ENCODE measurements at regions of chr14 and their contacts with region 1.

Region 1: DNA sequence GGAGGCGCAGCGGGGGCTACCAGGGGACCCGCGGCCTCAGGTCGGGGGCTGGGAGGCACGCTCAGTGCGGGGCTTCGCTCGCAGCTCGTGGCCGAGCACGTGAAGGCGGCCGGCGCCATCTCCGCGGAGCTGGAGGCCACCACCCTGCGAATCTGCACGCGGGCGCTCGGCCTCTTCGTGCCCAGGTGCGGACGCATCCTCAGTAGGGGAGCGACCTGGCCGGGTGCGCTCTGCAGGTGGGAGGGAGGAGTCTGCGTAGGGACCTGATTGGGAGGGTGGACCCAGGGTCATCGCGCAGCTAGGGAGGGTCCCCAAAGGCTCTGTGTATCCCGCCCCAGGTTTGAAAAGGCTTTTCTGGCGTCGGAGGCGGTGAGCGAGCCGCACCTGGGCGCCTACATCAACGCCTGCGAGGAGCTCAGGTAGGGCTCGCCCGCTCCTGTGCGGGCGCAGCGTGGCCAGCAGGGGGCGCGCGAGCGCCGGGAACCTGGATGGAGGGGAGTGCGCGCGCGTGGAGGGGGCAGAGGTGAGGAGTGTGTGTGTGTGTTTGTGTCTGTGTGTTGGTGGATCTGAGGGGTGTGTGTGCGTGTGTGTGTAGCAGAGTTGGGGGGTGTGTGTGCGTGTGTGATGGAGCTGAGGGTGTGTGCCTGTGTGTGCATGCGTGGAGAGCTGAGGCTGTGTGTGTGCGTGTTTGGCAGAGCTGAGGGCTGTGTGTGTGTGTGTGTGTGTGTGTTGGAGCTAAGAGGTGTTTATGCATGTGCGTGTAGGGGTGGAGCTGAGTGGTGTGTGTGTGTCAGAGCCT is 10.3 kb downstream of the EXOC3L4 start:
- DNase-seq: peak; percentile 91
- H3K4me3 ChIP-seq: peak overlapping the region in 1 of 2 experiments; percentile 57; a peak in 1 of 4 replicates
- H3K27ac ChIP-seq: no peak overlapping the region
- H3K4me1 ChIP-seq: peaks cover 6 to 9% of the 10 kb centered on the region in 2 experiments; a peak in 3 of 4 replicates
- H3K27me3 ChIP-seq: peaks cover 25% of the 10 kb centered on the region
- CTCF ChIP-seq: peak; percentile 95
- EP300 ChIP-seq: no peak
- RAD21 ChIP-seq: peak; percentile 87

Region 2: GRCh38 chr14:102694530-102695166 is 410.2 kb before region 1 on chr14:
- CTCF ChIA-PET with region 1: interaction called, 12 read pairs
- POLR2A ChIA-PET with region 1: no interaction called
- DNase-seq: peak; percentile 73
- H3K4me3 ChIP-seq: no peak overlapping the region
- H3K27ac ChIP-seq: no peak overlapping the region
- H3K4me1 ChIP-seq: peaks cover 0 to 31% of the 10 kb centered on the region in 2 experiments; a peak in 3 of 4 replicates
- H3K27me3 ChIP-seq: no peaks in the 10 kb centered on the region
- CTCF ChIP-seq: peak; percentile 79
- EP300 ChIP-seq: no peak
- RAD21 ChIP-seq: peak; percentile 85

Region 3: GRCh38 chr14:103091041-103091882 is 13.6 kb before region 1 on chr14:
- CTCF ChIA-PET with region 1: interaction called, 69 read pairs
- POLR2A ChIA-PET with region 1: no interaction called
- DNase-seq: peak; percentile 94
- H3K4me3 ChIP-seq: peak overlapping the region in 1 of 2 experiments; percentile 33; a peak in 2 of 4 replicates
- H3K27ac ChIP-seq: no peak overlapping the region
- H3K4me1 ChIP-seq: peaks cover 0 to 4% of the 10 kb centered on the region in 2 experiments; a peak in 1 of 4 replicates
- H3K27me3 ChIP-seq: no peaks in the 10 kb centered on the region
- CTCF ChIP-seq: peak; percentile 34; the same call in 1 of the 2 replicates
- EP300 ChIP-seq: no peak
- RAD21 ChIP-seq: peak; percentile 20; the same call in 1 of the 2 replicates

Region 4: DNA sequence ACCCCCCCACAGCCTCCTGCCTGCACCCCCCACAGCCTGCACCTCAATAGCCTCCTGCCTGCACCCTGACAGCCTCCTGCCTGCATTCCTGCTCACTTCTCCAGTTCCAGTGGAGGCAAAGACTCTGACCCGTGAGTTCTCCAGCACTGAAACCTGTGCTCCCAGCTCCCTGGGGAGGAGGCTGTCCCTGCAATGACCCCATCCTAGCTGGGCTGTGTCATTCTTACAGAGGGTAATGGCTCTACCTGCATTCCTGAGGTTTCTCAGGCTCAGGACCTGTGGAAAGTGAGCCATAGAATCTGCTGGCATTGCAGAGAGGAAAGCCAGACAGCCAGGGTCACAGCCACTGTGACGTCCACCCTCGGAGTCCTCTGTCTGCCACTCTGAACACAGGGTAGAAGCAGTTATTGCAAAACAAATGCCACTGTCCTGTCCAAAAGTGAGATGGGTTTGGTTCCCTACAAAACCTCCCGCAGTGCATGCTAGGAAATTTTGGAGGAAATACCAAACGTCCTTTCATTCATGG is 56.1 kb after region 1 on chr14:
- CTCF ChIA-PET with region 1: interaction called, 32 read pairs
- POLR2A ChIA-PET with region 1: no interaction called
- DNase-seq: no peak
- H3K4me3 ChIP-seq: no peak overlapping the region
- H3K27ac ChIP-seq: no peak overlapping the region
- H3K4me1 ChIP-seq: peaks cover 0 to 3% of the 10 kb centered on the region in 2 experiments; a peak in 1 of 4 replicates
- H3K27me3 ChIP-seq: no peaks in the 10 kb centered on the region
- CTCF ChIP-seq: no peak
- EP300 ChIP-seq: no peak
- RAD21 ChIP-seq: no peak

Region 5: DNA sequence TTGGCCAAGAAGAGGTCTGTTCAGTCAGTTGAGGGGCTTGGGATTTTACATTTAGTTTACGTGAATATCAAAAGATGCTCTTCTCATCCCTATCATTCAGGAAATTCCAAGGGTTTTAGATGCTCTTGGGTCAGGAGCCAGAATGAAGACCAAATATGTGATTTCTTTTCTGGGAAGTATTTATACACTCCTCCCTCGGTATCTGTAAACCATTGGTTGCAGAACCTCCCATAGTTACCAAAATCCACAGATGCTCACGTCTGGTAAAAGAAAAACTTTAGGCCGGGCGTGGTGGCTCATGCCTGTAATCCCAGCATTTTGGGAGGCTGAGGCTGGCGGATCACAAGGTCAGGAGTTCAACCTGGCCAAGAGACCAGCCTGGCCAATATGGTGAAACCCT is 94.3 kb after region 1 on chr14:
- CTCF ChIA-PET with region 1: interaction called, 17 read pairs
- POLR2A ChIA-PET with region 1: no interaction called
- DNase-seq: no peak
- H3K4me3 ChIP-seq: no peak overlapping the region
- H3K27ac ChIP-seq: no peak overlapping the region
- H3K4me1 ChIP-seq: no peaks in the 10 kb centered on the region
- H3K27me3 ChIP-seq: no peaks in the 10 kb centered on the region
- CTCF ChIP-seq: no peak
- EP300 ChIP-seq: no peak
- RAD21 ChIP-seq: no peak

Region 6: GRCh38 chr14:103281496-103282231 is 176.8 kb after region 1 on chr14:
- CTCF ChIA-PET with region 1: interaction called, 250 read pairs
- POLR2A ChIA-PET with region 1: no interaction called
- DNase-seq: peak; percentile 79
- H3K4me3 ChIP-seq: no peak overlapping the region
- H3K27ac ChIP-seq: no peak overlapping the region
- H3K4me1 ChIP-seq: no peaks in the 10 kb centered on the region; a peak in 1 of 4 replicates
- H3K27me3 ChIP-seq: peaks cover 13% of the 10 kb centered on the region; the same call in 1 of the 2 replicates
- CTCF ChIP-seq: peak; percentile 38
- EP300 ChIP-seq: no peak
- RAD21 ChIP-seq: peak; percentile 67

Measured in SK-N-SH (cell line).